Endothelial cell of umbilical vein (primary cell): ENCODE measurements at regions of chr1 and their contacts with region 1.

Region 1: GRCh38 chr1:43763497-43763973 is 56.2 kb downstream of the ST3GAL3 start:
- DNase-seq: peak; percentile 89
- H3K4me3 ChIP-seq: no peak overlapping the region
- H3K27ac ChIP-seq: no peak overlapping the region
- H3K4me1 ChIP-seq: peaks cover 6% of the 10 kb centered on the region
- H3K27me3 ChIP-seq: no peaks in the 10 kb centered on the region
- CTCF ChIP-seq: peak; percentile 78 to 86
- POLR2A ChIP-seq: no peak

Region 2: DNA sequence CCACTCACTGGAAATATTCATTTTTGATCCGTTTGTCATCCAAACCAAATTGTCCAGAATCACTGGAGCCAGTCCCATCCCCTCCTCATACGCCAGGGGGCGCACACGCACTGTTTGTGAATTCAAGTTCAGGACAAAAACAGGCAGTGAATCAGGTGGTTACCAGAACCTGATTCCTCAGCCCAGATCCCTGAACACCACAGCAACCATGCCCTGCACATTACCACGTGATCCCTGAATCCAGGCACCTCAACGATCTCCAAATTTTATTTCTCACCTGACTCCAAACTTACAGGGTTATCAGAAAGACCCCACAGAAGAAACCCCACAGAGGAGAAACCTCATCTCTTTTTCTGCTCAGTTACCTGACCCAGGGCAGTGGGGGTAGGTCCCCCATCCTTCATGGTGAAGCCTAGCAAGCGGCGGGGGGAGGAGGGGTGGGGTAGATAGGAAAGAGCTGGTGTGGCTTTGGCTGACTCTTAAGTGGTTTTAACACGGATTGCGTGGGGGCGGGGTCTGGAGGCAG is 234.3 kb before region 1 on chr1:
- CTCF ChIA-PET with region 1: interaction called, 5 read pairs
- POLR2A ChIA-PET with region 1: no interaction called
- dilution Hi-C with region 1: no loop called
- intact Hi-C with region 1: loop called (anchors 1 kb)
- DNase-seq: peak; percentile 81
- H3K4me3 ChIP-seq: no peak overlapping the region
- H3K27ac ChIP-seq: no peak overlapping the region
- H3K4me1 ChIP-seq: peaks cover 24% of the 10 kb centered on the region
- H3K27me3 ChIP-seq: no peaks in the 10 kb centered on the region
- CTCF ChIP-seq: peak; percentile 88 to 98
- POLR2A ChIP-seq: no peak

Region 3: DNA sequence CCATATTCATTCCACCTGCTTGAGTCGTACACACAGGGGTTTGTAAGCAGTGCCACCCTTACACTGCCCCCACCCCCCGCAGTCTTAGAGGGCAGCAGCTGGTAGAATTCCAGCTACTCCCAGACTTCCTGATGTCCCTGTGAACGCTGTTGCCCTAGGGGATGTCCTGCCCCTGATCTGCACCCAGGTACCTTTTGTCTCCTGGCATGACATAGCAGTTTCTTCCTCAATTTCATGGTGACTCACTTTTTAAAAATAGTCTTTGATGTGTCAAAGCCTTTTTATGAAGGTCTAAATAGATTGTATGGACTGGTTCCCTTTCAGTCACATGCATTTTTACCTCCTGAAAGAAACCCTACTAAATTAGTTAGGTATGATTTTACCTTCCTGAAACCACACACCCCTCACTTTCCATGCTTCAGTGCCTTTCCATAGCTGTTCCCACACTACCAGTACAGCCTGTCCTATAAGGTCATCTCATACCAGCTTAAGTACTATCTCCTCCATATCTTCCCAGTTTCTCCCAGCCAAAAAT is 20.2 kb after region 1 on chr1:
- CTCF ChIA-PET with region 1: interaction called, 14 read pairs
- POLR2A ChIA-PET with region 1: no interaction called
- dilution Hi-C with region 1: no loop called
- intact Hi-C with region 1: no loop called
- DNase-seq: no peak
- H3K4me3 ChIP-seq: no peak overlapping the region
- H3K27ac ChIP-seq: peak overlapping the region; percentile 30
- H3K4me1 ChIP-seq: peaks cover 18% of the 10 kb centered on the region
- H3K27me3 ChIP-seq: no peaks in the 10 kb centered on the region
- CTCF ChIP-seq: no peak
- POLR2A ChIP-seq: no peak

Region 4: DNA sequence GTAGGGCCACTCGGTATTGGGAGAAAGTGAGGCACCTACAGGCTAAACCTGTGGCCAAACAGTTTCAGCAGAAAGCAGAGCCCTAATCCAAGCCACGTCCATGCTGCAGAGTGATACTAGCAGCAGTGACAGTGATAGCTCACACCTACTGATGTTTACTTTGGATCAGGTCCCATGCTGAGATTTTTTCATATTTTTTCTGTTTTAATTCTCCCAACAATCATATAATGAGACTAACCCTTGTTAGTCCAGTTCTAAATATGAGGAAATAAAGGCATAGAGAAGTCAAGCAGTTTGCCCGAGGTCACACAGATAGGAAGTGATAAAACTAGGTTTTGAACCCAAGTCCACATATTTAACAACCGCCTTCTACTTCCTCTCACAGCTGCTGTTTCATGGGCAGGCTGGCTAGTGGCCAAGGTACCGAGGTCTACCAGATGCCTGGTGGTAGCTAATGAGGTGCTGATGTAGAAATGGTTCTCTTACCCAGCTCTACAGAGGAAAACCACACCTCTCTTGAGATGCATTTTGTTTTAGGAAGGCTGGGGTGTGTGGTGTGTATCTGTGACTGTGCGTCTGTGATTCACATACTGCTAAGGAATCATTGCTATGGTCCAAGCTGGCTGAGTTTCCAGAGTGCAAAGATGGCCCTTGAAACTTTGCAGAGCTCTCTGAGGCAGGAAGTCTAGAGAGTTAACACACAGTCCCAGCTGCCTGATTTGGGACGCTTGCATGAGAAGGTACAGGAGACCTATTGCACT is 89.8 kb after region 1 on chr1:
- CTCF ChIA-PET with region 1: interaction called, 18 read pairs
- POLR2A ChIA-PET with region 1: interaction called, 3 read pairs
- dilution Hi-C with region 1: no loop called
- intact Hi-C with region 1: no loop called
- DNase-seq: peak; percentile 83
- H3K4me3 ChIP-seq: no peak overlapping the region
- H3K27ac ChIP-seq: no peak overlapping the region
- H3K4me1 ChIP-seq: peaks cover 12% of the 10 kb centered on the region
- H3K27me3 ChIP-seq: peaks cover 0 to 3% of the 10 kb centered on the region in 2 experiments
- CTCF ChIP-seq: no peak
- POLR2A ChIP-seq: peak; percentile 34

Region 5: GRCh38 chr1:43912607-43913006 is 149.1 kb after region 1 on chr1:
- CTCF ChIA-PET with region 1: interaction called, 14 read pairs
- POLR2A ChIA-PET with region 1: no interaction called
- dilution Hi-C with region 1: no loop called
- intact Hi-C with region 1: no loop called
- DNase-seq: no peak
- H3K4me3 ChIP-seq: no peak overlapping the region
- H3K27ac ChIP-seq: no peak overlapping the region
- H3K4me1 ChIP-seq: no peaks in the 10 kb centered on the region
- H3K27me3 ChIP-seq: no peaks in the 10 kb centered on the region
- CTCF ChIP-seq: no peak
- POLR2A ChIP-seq: no peak

Region 6: DNA sequence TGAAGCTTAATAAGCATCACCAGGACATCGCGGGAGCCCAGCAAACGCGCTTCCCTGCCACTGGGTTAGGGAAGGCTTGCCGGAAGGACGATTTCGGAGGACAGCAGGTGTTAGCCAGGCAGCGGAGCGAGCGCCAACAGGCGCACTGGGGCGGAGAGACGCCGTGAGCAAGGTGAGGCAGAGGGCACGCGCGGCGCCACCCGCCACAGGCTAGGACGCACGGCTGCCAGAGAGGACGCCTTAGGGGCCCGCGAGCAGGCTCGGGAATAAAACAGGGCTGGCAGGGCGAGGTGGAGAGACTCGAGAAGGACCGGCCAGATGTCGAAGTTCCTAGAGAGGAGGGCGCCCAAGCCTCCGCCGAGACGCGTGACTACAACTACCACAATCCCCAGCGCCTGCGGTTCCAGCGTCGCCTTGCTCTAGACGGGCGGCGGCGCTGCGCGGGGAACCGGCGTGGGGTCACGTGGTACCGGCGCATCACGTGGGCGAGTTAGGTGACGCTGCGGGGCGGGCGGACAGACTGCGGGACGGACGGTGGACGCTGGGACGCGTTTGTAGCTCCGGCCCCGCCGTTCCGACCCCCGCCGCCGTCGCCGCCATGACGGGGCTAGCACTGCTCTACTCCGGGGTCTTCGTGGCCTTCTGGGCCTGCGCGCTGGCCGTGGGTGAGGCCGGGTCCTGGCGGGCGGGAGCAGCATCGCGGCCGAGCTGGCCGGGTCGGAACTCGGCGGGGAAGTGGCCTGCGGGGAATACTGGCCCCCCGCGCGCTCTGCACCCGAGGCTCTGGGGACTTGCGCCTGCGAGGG is 211.1 kb after region 1 on chr1 and contains the start of gene ATP6V0B:
- CTCF ChIA-PET with region 1: interaction called, 11 read pairs
- POLR2A ChIA-PET with region 1: no interaction called
- dilution Hi-C with region 1: no loop called
- intact Hi-C with region 1: no loop called
- DNase-seq: peak; percentile 94
- H3K4me3 ChIP-seq: peak within 1 kb of the TSS; percentile 69 to 73 (median 71)
- H3K27ac ChIP-seq: peak within 1 kb of the TSS; percentile 48
- H3K4me1 ChIP-seq: peaks cover 29% of the 10 kb centered on the region
- H3K27me3 ChIP-seq: no peaks in the 10 kb centered on the region
- CTCF ChIP-seq: no peak
- POLR2A ChIP-seq: peak; percentile 91
- total RNA-seq, gene ATP6V0B: 105 and 110 TPM in 2 replicates

Region 7: DNA sequence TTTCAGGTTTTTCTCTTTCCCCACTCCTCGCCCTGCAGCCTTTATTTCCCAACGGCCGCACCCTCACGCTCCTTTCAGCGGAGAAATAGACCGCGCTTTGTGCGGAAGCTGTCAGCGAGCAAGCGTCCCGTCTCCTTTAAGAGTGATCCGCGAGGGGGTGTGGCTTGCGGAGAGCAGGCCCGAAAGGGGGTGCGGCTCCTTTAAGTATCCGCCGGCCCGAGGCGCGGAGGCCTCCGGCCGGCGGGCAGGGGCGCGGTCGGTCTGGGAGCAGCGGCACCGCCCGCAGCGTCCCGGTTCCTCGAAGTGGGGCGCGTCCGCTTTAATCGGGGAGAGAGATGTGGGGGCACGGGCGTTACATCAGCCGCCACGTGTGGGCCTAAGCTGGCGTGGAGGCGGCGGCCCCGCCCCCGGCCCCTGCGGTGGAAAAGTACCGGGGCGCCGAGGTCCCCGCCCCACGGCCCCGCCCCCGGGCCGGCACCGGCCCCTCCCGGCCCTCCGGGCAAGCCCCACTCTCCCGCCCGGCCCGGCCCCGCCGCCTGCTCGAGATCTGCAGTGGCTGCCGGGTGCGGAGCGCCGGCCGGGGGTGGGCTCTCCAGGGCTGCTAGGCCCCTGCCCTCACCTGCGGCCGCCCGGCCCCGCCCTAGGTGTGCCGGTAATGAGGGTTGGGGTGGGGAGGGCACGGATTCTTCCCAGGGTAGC is 266.5 kb after region 1 on chr1:
- CTCF ChIA-PET with region 1: interaction called, 7 read pairs
- POLR2A ChIA-PET with region 1: no interaction called
- dilution Hi-C with region 1: no loop called
- intact Hi-C with region 1: loop called (anchors 1 kb)
- DNase-seq: peak; percentile 89
- H3K4me3 ChIP-seq: peak overlapping the region; percentile 35 to 76 (median 67)
- H3K27ac ChIP-seq: peak overlapping the region; percentile 24
- H3K4me1 ChIP-seq: peaks cover 7% of the 10 kb centered on the region
- H3K27me3 ChIP-seq: no peaks in the 10 kb centered on the region
- CTCF ChIP-seq: no peak
- POLR2A ChIP-seq: no peak